ENCODE measurements at regions of chr2 and their contacts with region 1.

Region 1: GRCh38 chr2:24875272-24875671 is 44.8 kb downstream of the ADCY3 start:
- DNase-seq: no peak
- H3K4me3 ChIP-seq: no peak overlapping the region
- H3K27ac ChIP-seq: peak overlapping the region in 4 of 59 donors; percentile 26 to 78 (median 36)
- H3K27me3 ChIP-seq: no peaks in the 10 kb centered on the region
- CTCF ChIP-seq: no peak

Region 2: GRCh38 chr2:24836706-24837105 is 38.6 kb before region 1 on chr2:
- intact Hi-C with region 1: loop called (anchors 5 kb)
- DNase-seq: no peak
- H3K4me3 ChIP-seq: no peak overlapping the region
- H3K27ac ChIP-seq: no peak overlapping the region
- H3K27me3 ChIP-seq: no peaks in the 10 kb centered on the region
- CTCF ChIP-seq: no peak

Measured in dorsolateral prefrontal cortex (tissue), 120 donors.